CD4-positive, alpha-beta memory T cell (primary cell): ENCODE measurements at regions of chr3 and their contacts with region 1.

Region 1: DNA sequence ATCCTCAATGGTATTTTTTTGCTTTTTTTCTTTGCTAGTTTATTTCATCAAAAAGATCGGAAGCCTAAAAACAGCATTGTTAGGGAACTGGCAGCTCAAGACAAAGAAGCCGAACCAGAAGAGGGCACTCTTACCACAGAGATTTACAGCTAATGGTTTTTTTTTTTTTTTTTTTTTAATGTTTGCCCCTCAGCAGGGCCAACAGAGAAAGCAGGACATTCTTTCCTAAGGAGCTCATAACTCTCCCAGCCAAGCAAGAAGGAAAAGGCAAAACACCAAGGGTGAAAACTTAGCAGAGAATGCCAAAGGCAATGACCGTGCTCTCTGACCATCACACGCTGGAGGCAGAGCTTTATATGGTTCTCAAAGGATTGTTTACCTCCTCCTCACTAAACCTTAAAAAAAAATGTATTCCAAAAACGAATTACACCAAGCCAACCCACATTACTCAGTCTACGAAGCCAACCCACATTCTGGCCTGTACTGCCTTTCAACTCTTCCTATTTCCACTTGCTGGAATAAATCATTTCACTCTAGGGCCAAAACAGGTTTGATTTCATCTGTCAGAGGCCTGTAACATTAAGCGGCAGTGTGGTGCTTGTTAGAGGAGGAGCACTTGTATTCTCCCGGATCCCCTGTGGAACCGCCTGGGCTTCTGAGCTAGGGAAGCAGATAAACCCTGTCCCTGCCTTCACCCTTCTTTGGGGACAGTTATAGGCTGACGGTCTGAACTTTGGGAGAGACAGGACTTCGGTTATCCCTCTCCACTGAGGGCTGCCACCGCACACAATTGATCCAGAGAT is 35.6 kb upstream of the GYG1 start:
- DNase-seq: peak in 4 of 5 donors; percentile 18 to 44 (median 38)
- H3K4me3 ChIP-seq: no peak overlapping the region
- H3K4me3 Mint-ChIP-seq: no peak overlapping the region
- H3K27ac ChIP-seq: no peak overlapping the region
- H3K27ac Mint-ChIP-seq: no peak overlapping the region
- H3K4me1 ChIP-seq: no peaks in the 10 kb centered on the region
- H3K4me1 Mint-ChIP-seq: peaks cover 5 to 8% (median 6%) of the 10 kb centered on the region in 4 donors
- H3K27me3 ChIP-seq: no peaks in the 10 kb centered on the region
- H3K27me3 Mint-ChIP-seq: peaks cover 0 to 2% of the 10 kb centered on the region in 2 donors

Region 2: DNA sequence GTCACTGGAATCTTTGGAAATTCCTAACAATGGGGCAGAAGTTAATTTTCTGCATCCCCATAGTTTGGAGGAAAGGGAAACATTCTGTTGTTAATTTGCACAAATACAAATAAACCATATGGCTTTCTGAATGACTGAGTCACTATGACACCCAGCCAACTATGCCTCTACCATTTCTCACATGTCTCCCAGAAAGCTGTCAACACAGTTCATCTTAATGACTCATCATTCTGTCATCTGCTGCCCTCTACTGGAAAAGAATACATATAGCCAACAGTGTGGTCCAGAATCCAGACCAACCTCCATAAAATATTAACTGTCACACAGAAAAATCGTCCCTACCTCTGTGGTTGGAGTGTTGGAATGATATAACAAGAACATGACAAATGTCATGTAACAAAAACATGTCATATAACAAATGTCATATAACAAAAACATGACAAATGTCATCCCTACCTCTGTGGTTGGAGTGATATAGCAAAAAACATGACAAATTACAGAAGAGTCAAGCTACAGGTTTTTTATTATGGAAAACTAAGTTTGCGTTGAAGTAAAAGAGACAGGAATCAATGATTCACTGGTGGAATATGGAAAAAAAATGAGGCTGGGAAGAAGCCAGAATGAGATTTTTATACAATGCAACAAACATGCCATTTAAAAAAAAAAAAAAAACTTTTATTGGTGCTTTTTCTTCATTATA is 12.1 kb before region 1 on chr3:
- CTCF ChIA-PET with region 1: interaction called, 17 read pairs
- POLR2A ChIA-PET with region 1: no interaction called
- intact Hi-C with region 1: no loop called
- DNase-seq: peak in 4 of 5 donors; percentile 32 to 47 (median 41)
- H3K4me3 ChIP-seq: no peak overlapping the region
- H3K4me3 Mint-ChIP-seq: no peak overlapping the region
- H3K27ac ChIP-seq: no peak overlapping the region
- H3K27ac Mint-ChIP-seq: no peak overlapping the region
- H3K4me1 ChIP-seq: no peaks in the 10 kb centered on the region
- H3K4me1 Mint-ChIP-seq: no peaks in the 10 kb centered on the region
- H3K27me3 ChIP-seq: no peaks in the 10 kb centered on the region
- H3K27me3 Mint-ChIP-seq: peaks cover 0 to 6% of the 10 kb centered on the region in 2 donors

Region 3: GRCh38 chr3:148968321-148968720 is 12.6 kb after region 1 on chr3:
- CTCF ChIA-PET with region 1: interaction called, 11 read pairs
- POLR2A ChIA-PET with region 1: no interaction called
- intact Hi-C with region 1: no loop called
- DNase-seq: no peak
- H3K4me3 ChIP-seq: no peak overlapping the region
- H3K4me3 Mint-ChIP-seq: no peak overlapping the region
- H3K27ac ChIP-seq: no peak overlapping the region
- H3K27ac Mint-ChIP-seq: no peak overlapping the region
- H3K4me1 ChIP-seq: no peaks in the 10 kb centered on the region
- H3K4me1 Mint-ChIP-seq: no peaks in the 10 kb centered on the region
- H3K27me3 ChIP-seq: no peaks in the 10 kb centered on the region
- H3K27me3 Mint-ChIP-seq: no peaks in the 10 kb centered on the region

Region 4: DNA sequence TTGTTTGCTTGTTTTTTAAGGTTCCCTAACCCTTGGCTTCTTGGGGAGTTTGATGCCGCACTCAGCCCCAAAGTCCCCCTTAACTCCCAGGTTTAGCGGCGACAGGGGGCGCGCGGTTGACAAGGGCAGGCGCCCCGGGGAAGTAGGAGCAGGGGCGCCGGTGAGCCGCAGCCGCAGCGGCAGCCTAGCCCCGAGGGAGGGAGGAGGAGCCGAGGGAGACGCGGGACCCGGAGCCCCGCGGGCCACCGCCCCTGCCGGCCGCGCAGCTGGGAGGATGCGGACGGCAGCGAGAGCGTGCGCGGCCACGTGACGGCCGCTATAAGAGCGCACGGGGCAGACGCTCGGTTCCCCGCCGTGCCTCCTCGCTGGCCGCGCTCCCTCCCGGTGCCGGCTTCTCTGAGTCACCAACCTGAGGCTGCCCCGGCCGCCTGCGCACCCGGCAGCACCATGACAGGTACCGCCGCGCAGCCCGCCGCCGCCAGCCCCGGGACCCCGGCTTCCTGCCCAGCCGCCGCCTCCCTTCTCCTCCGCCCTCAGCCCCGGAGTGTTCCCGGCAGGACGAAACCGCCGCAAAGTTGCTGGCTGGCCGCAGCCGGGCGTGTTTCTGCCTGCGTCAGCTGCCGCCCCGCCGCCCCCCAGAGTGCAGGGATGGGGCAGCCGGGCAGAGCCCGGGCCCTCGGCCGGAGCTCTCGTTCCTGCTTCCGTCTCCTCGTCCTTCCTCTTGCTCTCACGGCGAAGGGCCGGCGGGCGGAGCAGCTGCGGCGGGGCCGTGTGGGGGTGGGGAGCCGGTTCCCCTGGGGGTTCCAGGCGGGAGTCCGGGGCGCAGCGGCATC is 35.7 kb after region 1 on chr3 and contains the start of gene GYG1:
- CTCF ChIA-PET with region 1: interaction called, 11 read pairs
- POLR2A ChIA-PET with region 1: no interaction called
- intact Hi-C with region 1: no loop called
- DNase-seq: peak; percentile 76 to 87 (median 83)
- H3K4me3 ChIP-seq: peak within 1 kb of the TSS; percentile 49 to 56
- H3K4me3 Mint-ChIP-seq: peak within 1 kb of the TSS; percentile 84 to 92 (median 88)
- H3K27ac ChIP-seq: peak within 1 kb of the TSS; percentile 66
- H3K27ac Mint-ChIP-seq: peak within 1 kb of the TSS; percentile 79 to 93 (median 91)
- H3K4me1 ChIP-seq: peaks cover 27% of the 10 kb centered on the region
- H3K4me1 Mint-ChIP-seq: peaks cover 21 to 42% (median 27%) of the 10 kb centered on the region in 4 donors
- H3K27me3 ChIP-seq: no peaks in the 10 kb centered on the region
- H3K27me3 Mint-ChIP-seq: no peaks in the 10 kb centered on the region
- total RNA-seq, gene GYG1: 20.9 to 24.1 TPM

Region 5: GRCh38 chr3:149273096-149273751 is 317.5 kb after region 1 on chr3:
- CTCF ChIA-PET with region 1: interaction called, 47 read pairs
- POLR2A ChIA-PET with region 1: interaction called, 3 read pairs
- intact Hi-C with region 1: loop called (anchors 1 kb)
- DNase-seq: peak in 4 of 5 donors; percentile 58 to 69 (median 62)
- H3K4me3 ChIP-seq: no peak overlapping the region
- H3K4me3 Mint-ChIP-seq: no peak overlapping the region
- H3K27ac ChIP-seq: no peak overlapping the region
- H3K27ac Mint-ChIP-seq: no peak overlapping the region
- H3K4me1 ChIP-seq: peaks cover 17% of the 10 kb centered on the region
- H3K4me1 Mint-ChIP-seq: peaks cover 13 to 15% (median 14%) of the 10 kb centered on the region in 4 donors
- H3K27me3 ChIP-seq: no peaks in the 10 kb centered on the region
- H3K27me3 Mint-ChIP-seq: no peaks in the 10 kb centered on the region

Region 6: GRCh38 chr3:149646181-149646766 is 690.5 kb after region 1 on chr3:
- CTCF ChIA-PET with region 1: no interaction called
- POLR2A ChIA-PET with region 1: no interaction called
- intact Hi-C with region 1: no loop called
- DNase-seq: no peak
- H3K4me3 ChIP-seq: no peak overlapping the region
- H3K4me3 Mint-ChIP-seq: no peak overlapping the region
- H3K27ac ChIP-seq: no peak overlapping the region
- H3K27ac Mint-ChIP-seq: no peak overlapping the region
- H3K4me1 ChIP-seq: no peaks in the 10 kb centered on the region
- H3K4me1 Mint-ChIP-seq: no peaks in the 10 kb centered on the region
- H3K27me3 ChIP-seq: no peaks in the 10 kb centered on the region
- H3K27me3 Mint-ChIP-seq: peaks cover 10 to 13% of the 10 kb centered on the region in 2 donors

Region 7: DNA sequence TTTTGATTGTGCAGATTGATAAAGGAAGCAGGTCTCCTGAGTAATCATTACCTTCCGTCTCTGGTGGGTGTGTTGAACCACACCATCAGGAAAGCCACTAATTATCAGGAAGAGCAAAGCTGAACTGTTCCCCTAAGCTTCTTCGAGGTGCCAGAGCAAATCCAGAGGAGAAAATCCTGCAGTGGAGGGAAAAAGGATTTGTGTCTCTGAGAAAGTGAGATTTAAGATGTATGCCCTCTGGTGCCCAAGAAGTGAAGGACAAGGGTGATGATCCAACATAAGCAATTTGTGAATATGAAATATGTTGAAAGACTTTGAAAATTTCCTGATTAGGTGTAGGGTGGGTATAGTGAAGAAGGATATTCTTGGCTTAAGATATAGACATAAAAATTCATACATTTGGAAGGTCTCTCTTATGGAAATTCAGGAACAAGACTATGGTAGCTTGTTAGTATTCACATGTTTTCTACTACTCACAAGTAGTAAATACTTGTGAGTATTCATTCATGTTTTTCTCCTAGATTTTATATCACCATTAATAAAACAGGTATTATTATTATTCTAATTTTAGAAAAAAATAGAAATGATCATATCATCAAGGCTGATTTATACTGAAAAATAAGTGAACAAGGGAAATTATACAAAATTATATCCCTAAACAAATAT is 761.8 kb after region 1 on chr3:
- CTCF ChIA-PET with region 1: interaction called, 4 read pairs
- POLR2A ChIA-PET with region 1: no interaction called
- intact Hi-C with region 1: loop called (anchors 10 kb)
- DNase-seq: peak in 4 of 5 donors; percentile 7 to 26 (median 16)
- H3K4me3 ChIP-seq: no peak overlapping the region
- H3K4me3 Mint-ChIP-seq: peak overlapping the region in 1 of 8 donors; percentile 4
- H3K27ac ChIP-seq: no peak overlapping the region
- H3K27ac Mint-ChIP-seq: peak overlapping the region in 1 of 7 donors; percentile 10
- H3K4me1 ChIP-seq: no peaks in the 10 kb centered on the region
- H3K4me1 Mint-ChIP-seq: peaks cover 0 to 3% (median 0%) of the 10 kb centered on the region in 4 donors
- H3K27me3 ChIP-seq: no peaks in the 10 kb centered on the region
- H3K27me3 Mint-ChIP-seq: no peaks in the 10 kb centered on the region